ENCODE measurements at regions of chr1 and their contacts with region 1.

Region 1: GRCh38 chr1:112715264-112716053 is at the start of gene PPM1J:
- DNase-seq: peak; percentile 79
- ATAC-seq: peak; percentile 69
- H3K4me3 ChIP-seq: peak within 1 kb of the TSS; percentile 58 to 75 (median 59)
- H3K27ac ChIP-seq: no peak within 1 kb of the TSS
- H3K4me1 ChIP-seq: peaks cover 30% of the 10 kb centered on the region
- H3K27me3 ChIP-seq: peaks cover 11 to 60% of the 10 kb centered on the region in 2 experiments
- CTCF ChIP-seq: no peak
- EP300 ChIP-seq: no peak
- POLR2A ChIP-seq: no peak
- RAD21 ChIP-seq: no peak
- total RNA-seq, gene PPM1J: 0.07 TPM in 1 of 2 replicates, not detected in the other

Region 2: DNA sequence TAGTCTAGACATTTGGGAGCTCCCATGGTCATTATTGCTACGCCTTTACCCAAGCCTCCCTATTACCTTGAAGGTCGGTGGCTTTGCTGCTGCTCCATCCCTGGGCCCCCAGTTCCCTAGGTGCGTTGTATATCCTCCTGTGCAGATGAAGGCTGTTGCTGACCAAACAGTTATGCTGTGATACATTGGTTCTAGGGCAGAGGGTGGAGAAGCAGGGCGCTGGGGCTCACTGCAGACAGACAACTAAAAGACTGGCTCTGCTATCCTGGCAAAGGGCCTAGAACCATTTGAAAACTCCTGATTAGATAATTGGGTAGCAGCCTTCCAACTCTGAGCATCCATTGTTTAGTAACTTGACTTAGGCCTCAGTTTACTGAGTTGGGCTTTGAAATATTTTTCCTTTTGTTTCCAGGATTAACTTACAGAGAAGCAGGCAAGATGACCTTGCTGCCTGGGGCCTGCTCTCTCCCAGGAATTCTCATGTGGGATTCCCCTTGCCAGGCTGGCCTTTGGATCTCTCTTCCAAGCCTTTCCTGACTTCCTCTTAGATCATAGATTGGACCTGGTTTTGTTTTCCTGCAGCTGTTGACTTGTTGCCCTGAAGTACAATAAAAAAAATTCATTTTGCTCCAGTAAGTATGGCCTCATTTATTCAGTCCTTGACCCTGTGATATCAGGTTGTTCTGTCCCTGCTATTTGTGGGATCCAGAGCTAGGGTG is 1472.5 kb before region 1 on chr1:
- CTCF ChIA-PET with region 1: no interaction called
- POLR2A ChIA-PET with region 1: no interaction called
- in situ Hi-C with region 1: no loop called
- intact Hi-C with region 1: no loop called
- DNase-seq: peak; percentile 38
- ATAC-seq: peak; percentile 45; the same call in 1 of the 3 replicates
- H3K4me3 ChIP-seq: no peak overlapping the region
- H3K27ac ChIP-seq: peak overlapping the region; percentile 54
- H3K4me1 ChIP-seq: peaks cover 81% of the 10 kb centered on the region
- H3K27me3 ChIP-seq: no peaks in the 10 kb centered on the region
- CTCF ChIP-seq: no peak
- EP300 ChIP-seq: no peak
- POLR2A ChIP-seq: no peak
- RAD21 ChIP-seq: no peak

Region 3: DNA sequence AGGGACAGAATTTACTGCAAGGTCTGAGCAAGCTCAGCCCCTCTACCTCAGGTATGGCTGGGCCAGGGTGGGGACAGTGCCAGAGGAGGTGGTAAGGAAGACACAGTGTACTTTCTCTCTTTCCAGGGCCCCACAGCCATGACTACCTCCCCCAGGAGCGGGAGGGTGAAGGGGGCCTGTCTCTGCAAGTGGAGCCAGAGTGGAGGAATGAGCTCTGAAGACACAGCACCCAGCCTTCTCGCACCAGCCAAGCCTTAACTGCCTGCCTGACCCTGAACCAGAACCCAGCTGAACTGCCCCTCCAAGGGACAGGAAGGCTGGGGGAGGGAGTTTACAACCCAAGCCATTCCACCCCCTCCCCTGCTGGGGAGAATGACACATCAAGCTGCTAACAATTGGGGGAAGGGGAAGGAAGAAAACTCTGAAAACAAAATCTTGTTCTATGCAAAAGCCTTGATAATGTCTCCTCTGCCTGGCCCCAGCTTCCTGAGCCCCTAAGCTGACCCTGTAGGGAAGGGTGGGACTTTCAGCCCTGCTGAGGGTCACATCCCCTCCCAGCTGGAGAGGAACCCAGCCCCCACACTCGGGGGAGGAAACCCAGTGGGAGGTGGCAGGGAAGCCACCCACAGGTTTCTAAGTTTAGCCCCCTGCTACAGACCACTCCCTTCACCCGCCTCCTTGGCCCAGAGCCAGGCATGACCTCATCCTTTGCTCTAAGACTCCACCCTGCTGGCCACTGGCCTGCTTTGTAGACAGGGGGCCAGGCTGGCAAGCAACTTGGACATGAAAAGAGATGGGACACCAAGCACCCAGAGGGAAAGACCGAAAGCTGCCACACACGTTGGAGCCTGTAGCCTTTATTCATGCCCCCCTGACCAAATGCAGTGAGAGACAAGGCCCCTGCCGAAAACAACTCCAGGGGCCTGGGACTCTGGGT is 14.9 kb before region 1 on chr1:
- CTCF ChIA-PET with region 1: no interaction called
- POLR2A ChIA-PET with region 1: interaction called, 15 read pairs
- in situ Hi-C with region 1: no loop called
- intact Hi-C with region 1: no loop called
- DNase-seq: peak; percentile 90
- ATAC-seq: peak; percentile 58
- H3K4me3 ChIP-seq: peak overlapping the region in 1 of 3 experiments; percentile 26; a peak in 1 of 6 replicates
- H3K27ac ChIP-seq: peak overlapping the region; percentile 93
- H3K4me1 ChIP-seq: peaks cover 81% of the 10 kb centered on the region
- H3K27me3 ChIP-seq: no peaks in the 10 kb centered on the region; a peak in 1 of 5 replicates
- CTCF ChIP-seq: peak; percentile 38
- EP300 ChIP-seq: 0 out of 4 replicates have a peak, but pooled peaks of 1 of the 2 experiments have one; percentile 15
- POLR2A ChIP-seq: 0 out of 4 replicates have a peak, but pooled peaks of 1 of the 2 experiments have one; percentile 20
- RAD21 ChIP-seq: no peak

Region 4: GRCh38 chr1:112744009-112744578 is 28.6 kb after region 1 on chr1:
- CTCF ChIA-PET with region 1: no interaction called
- POLR2A ChIA-PET with region 1: no interaction called
- in situ Hi-C with region 1: no loop called
- intact Hi-C with region 1: no loop called
- DNase-seq: no peak
- ATAC-seq: no peak
- H3K4me3 ChIP-seq: no peak overlapping the region
- H3K27ac ChIP-seq: no peak overlapping the region
- H3K4me1 ChIP-seq: no peaks in the 10 kb centered on the region
- H3K27me3 ChIP-seq: 0 out of 5 replicates have a peak, but pooled peaks cover 0 to 4% of the 10 kb centered on the region in 2 experiments
- CTCF ChIP-seq: no peak
- EP300 ChIP-seq: no peak
- POLR2A ChIP-seq: no peak
- RAD21 ChIP-seq: no peak

Region 5: DNA sequence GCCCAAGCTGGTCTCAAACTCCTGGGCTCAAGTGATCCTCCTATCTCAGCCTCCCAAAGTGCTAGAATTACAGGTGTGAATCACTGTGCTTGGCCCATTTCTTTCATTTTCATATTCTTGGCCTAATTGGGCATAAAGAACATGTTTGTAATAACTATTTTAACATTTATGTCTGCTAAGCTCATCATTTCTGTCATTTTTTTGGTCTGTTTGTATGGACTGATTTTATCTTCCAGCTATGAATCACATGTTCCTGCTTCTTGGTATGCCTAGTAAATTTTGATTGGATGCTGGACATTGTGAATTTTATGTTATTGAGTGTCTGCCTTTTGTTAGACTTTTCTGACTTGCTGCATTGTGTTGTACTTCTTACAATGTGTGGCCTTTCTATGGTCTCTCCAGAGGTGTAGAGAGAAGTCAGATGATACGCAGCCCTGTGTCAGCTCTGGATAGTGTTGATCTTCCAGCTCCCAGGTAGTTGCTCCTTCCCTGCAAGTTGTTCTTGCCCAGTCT is 38.7 kb after region 1 on chr1:
- CTCF ChIA-PET with region 1: no interaction called
- POLR2A ChIA-PET with region 1: no interaction called
- in situ Hi-C with region 1: no loop called
- intact Hi-C with region 1: no loop called
- DNase-seq: no peak
- ATAC-seq: no peak
- H3K4me3 ChIP-seq: no peak overlapping the region
- H3K27ac ChIP-seq: no peak overlapping the region
- H3K4me1 ChIP-seq: no peaks in the 10 kb centered on the region
- H3K27me3 ChIP-seq: no peaks in the 10 kb centered on the region; a peak in 2 of 5 replicates
- CTCF ChIP-seq: no peak
- EP300 ChIP-seq: no peak
- POLR2A ChIP-seq: no peak
- RAD21 ChIP-seq: no peak

Region 6: GRCh38 chr1:112809253-112809684 is 93.8 kb after region 1 on chr1:
- CTCF ChIA-PET with region 1: interaction called, 37 read pairs
- POLR2A ChIA-PET with region 1: no interaction called
- in situ Hi-C with region 1: loop called (anchors 5 kb)
- intact Hi-C with region 1: loop called (anchors 1 kb)
- DNase-seq: peak; percentile 28
- ATAC-seq: peak; percentile 80
- H3K4me3 ChIP-seq: no peak overlapping the region
- H3K27ac ChIP-seq: no peak overlapping the region
- H3K4me1 ChIP-seq: peaks cover 31% of the 10 kb centered on the region
- H3K27me3 ChIP-seq: peaks cover 0 to 9% of the 10 kb centered on the region in 2 experiments; a peak in 1 of 5 replicates
- CTCF ChIP-seq: peak; percentile 92
- EP300 ChIP-seq: no peak
- POLR2A ChIP-seq: no peak
- RAD21 ChIP-seq: peak; percentile 56

Region 7: DNA sequence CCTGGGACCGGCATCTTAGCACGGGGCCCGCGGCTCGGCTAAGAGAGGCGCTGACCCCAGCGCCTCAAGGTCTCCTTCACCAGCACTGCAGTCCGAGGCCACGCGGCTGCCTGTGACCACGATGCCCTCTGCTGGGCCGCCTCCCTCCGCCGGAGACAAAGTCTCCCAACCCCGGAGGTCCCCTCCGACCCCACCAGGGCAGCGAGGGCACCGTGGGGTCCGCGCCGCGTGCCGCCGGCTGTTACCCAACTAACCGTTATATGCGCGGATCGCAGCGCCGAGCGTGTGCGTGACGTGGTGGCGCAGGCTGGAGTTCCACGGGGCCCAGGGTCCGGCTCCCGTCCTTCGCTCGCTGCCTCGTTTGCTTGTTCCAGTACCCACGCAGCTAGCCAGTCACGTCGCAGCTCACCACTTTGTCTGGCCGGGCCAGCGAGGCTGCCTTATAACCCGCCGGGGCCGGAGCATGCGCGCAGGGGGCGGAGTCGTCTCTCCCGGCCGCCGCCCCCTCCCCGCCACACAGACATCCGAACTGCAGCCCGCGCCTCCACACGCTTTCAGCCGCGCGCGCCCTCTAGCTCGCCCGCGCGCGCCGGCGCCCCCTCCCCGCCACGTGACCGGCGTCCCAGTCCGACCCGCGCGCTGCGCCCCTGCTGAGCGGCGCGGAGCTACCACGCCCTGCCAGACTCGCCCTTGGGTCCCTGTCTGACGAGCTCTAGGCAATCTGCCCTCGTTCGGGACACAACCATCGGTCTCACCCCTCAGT is 240.5 kb after region 1 on chr1 and contains the start of gene SLC16A1:
- CTCF ChIA-PET with region 1: no interaction called
- POLR2A ChIA-PET with region 1: interaction called, 3 read pairs
- in situ Hi-C with region 1: no loop called
- intact Hi-C with region 1: loop called (anchors 5 kb)
- DNase-seq: peak; percentile 82
- ATAC-seq: peak; percentile 85
- H3K4me3 ChIP-seq: peak within 1 kb of the TSS; percentile 78 to 91 (median 83)
- H3K27ac ChIP-seq: peak within 1 kb of the TSS; percentile 87
- H3K4me1 ChIP-seq: peaks cover 69% of the 10 kb centered on the region
- H3K27me3 ChIP-seq: no peaks in the 10 kb centered on the region; a peak in 1 of 5 replicates
- CTCF ChIP-seq: peak; percentile 69
- EP300 ChIP-seq: peak in 1 of 2 experiments; percentile 41; a peak in 1 of 4 replicates
- POLR2A ChIP-seq: peak; percentile 97 to 99
- RAD21 ChIP-seq: peak; percentile 60; the same call in 1 of the 2 replicates
- total RNA-seq, gene SLC16A1: 67.0 and 106 TPM in 2 replicates

Region 8: DNA sequence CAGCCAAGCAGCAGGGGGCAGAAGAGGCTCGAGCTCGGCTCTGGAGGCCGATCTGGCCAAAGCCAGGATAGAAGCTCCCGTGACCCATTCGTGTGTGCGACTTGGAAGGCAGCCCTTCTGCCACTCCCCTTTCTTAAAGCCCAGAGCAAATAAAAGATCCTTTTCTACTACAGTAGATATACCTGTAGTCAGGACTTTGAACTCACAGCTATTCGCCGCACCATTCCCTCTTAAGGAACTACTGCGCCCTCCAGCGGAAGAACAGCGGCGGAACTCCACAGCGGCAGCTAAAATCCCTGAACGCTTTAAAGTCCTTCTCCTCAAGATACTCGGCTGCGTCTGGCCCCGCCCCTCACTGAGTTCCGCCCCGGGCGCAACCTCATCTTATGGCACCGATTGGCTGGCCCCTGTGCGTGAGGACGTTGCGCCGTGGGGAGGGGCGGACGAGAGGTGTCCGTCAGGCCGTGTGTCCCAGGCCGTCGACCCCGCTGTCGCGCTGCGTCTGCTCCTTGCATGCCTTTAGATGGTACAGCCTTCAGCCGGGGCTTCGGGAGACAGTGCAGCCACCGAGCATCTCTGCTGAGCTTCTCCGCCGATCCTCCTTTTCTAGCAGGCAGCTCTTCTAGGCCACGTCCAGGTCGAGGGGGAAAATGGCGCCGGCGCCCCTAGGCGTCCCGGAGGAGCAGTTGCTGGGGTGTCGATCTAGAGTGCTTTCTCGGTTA is 357.5 kb after region 1 on chr1 and contains the start of gene LRIG2:
- CTCF ChIA-PET with region 1: no interaction called
- POLR2A ChIA-PET with region 1: interaction called, 4 read pairs
- in situ Hi-C with region 1: no loop called
- intact Hi-C with region 1: loop called (anchors 2 kb)
- DNase-seq: peak; percentile 91
- ATAC-seq: peak; percentile 97
- H3K4me3 ChIP-seq: peak within 1 kb of the TSS; percentile 80 to 91 (median 86)
- H3K27ac ChIP-seq: peak within 1 kb of the TSS; percentile 81
- H3K4me1 ChIP-seq: peaks cover 35% of the 10 kb centered on the region
- H3K27me3 ChIP-seq: no peaks in the 10 kb centered on the region
- CTCF ChIP-seq: peak; percentile 81
- EP300 ChIP-seq: 0 out of 4 replicates have a peak, but pooled peaks of 1 of the 2 experiments have one; percentile 10
- POLR2A ChIP-seq: peak; percentile 88 to 98
- RAD21 ChIP-seq: peak; percentile 64
- total RNA-seq, gene LRIG2: 3.3 and 8.1 TPM in 2 replicates

Measured in HepG2 (cell line).